ENCODE measurements at regions of chr11 and their contacts with region 1.

Region 1: GRCh38 chr11:86869966-86870570 is 69.7 kb downstream of the PRSS23 start:
- DNase-seq: no peak

Region 2: GRCh38 chr11:86919557-86920210 is 49.6 kb after region 1 on chr11:
- intact Hi-C with region 1: loop called (anchors 1 kb)
- DNase-seq: no peak

Region 3: GRCh38 chr11:87290304-87290922 is 420.3 kb after region 1 on chr11:
- intact Hi-C with region 1: loop called (anchors 10 kb)
- DNase-seq: no peak

Region 4: GRCh38 chr11:87421422-87421821 is 551.4 kb after region 1 on chr11:
- intact Hi-C with region 1: loop called (anchors 10 kb)
- DNase-seq: no peak